ENCODE measurements at regions of chr16 and their contacts with region 1.

Region 1: GRCh38 chr16:3509470-3509928 is 8.7 kb downstream of the CLUAP1 start:
- DNase-seq: no peak
- ATAC-seq: peak in 1 of 8 donors; percentile 27
- H3K4me3 ChIP-seq: no peak overlapping the region
- H3K27ac ChIP-seq: peak overlapping the region in 1 of 10 donors; percentile 45
- H3K4me1 ChIP-seq: peaks cover 0 to 1% (median 0%) of the 10 kb centered on the region in 9 donors
- H3K27me3 ChIP-seq: no peaks in the 10 kb centered on the region
- CTCF ChIP-seq: no peak

Region 2: GRCh38 chr16:3150346-3151218 is 358.9 kb before region 1 on chr16:
- intact Hi-C with region 1: loop called in 1 of 10 experiments (anchors 10 kb)
- DNase-seq: peak; percentile 93 to 94
- ATAC-seq: peak; percentile 91 to 95 (median 94)
- H3K4me3 ChIP-seq: peak overlapping the region; percentile 53 to 78 (median 70)
- H3K27ac ChIP-seq: peak overlapping the region; percentile 59 to 93 (median 87)
- H3K4me1 ChIP-seq: peaks cover 2 to 38% (median 21%) of the 10 kb centered on the region in 9 donors
- H3K27me3 ChIP-seq: peaks cover 0 to 14% (median 0%) of the 10 kb centered on the region in 7 donors
- CTCF ChIP-seq: no peak

Region 3: DNA sequence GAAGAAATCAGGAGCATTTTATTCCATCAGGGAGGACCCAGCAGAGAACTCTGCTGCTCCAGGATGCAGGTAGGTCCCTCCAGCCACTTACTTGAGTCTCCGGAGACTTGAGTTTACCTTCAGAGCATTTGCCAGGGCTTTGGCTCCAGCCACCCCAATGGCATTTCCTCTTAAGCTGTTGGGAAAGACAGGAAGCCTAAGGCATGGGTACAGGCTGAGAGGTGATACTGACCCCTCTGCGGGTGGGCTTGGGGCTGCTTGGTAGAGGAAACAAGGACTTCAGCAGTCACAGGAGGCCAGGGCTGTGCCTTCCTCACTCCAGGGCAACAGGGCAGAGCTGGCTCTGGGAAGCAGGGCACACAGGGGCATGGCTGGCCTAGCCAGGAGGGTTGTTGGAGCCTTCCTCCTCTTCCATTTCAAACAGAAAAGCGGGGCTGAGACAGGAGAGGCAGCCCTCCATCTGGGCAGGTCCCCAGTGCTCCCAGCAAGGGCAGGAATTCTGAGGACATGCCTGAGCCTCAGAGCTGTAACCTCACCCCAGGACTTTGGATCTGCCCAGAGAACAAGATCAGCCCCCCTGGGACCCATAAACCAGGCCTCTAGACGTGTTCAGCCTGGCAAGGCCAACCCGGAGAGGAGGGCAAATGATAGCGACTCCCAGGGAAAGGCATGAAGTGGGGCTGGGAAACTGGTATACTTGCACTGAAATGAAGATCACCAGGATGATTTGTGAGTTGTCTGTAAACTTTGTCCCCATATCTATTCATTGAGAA is 33.3 kb after region 1 on chr16:
- intact Hi-C with region 1: no loop called
- DNase-seq: no peak
- ATAC-seq: no peak
- H3K4me3 ChIP-seq: no peak overlapping the region
- H3K27ac ChIP-seq: no peak overlapping the region
- H3K4me1 ChIP-seq: peaks cover 0 to 8% (median 0%) of the 10 kb centered on the region in 9 donors
- H3K27me3 ChIP-seq: no peaks in the 10 kb centered on the region
- CTCF ChIP-seq: no peak

Measured in heart right ventricle (tissue), 16 donors.